ENCODE measurements at regions of chrX and their contacts with region 1.

Region 1: DNA sequence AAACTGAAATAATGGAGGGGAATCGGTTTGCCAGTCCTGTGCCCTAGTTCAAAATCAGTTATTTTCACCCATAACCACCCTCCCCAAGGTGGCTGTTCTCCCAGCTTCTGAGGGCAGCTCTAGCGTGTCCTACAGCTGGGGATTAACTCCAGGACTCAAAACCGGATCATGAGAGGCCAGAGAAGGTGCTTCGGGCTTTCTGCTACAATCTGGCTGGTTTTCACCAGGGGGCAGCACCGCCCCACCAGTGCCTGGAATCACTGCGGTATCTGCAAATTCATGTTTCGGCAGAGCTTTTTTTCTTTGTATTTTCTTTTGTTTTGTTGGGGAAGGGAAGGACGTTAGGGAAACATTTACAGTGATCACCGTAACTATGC is 28.4 kb downstream of the PDHA1 start:
- DNase-seq: peak; percentile 50 to 79 (median 68)
- H3K4me3 ChIP-seq: peak overlapping the region; percentile 9
- H3K27ac ChIP-seq: no peak overlapping the region
- H3K4me1 ChIP-seq: no peaks in the 10 kb centered on the region
- H3K27me3 ChIP-seq: no peaks in the 10 kb centered on the region
- CTCF ChIP-seq: peak; percentile 30 to 54 (median 42)
- EP300 ChIP-seq: no peak
- POLR2A ChIP-seq: no peak

Region 2: GRCh38 chrX:19535476-19535875 is 163.3 kb after region 1 on chrX:
- intact Hi-C with region 1: loop called in 3 of 4 experiments (anchors 10 kb)
- DNase-seq: no peak
- H3K4me3 ChIP-seq: no peak overlapping the region
- H3K27ac ChIP-seq: no peak overlapping the region
- H3K4me1 ChIP-seq: no peaks in the 10 kb centered on the region
- H3K27me3 ChIP-seq: no peaks in the 10 kb centered on the region
- CTCF ChIP-seq: no peak
- EP300 ChIP-seq: no peak
- POLR2A ChIP-seq: no peak

Region 3: DNA sequence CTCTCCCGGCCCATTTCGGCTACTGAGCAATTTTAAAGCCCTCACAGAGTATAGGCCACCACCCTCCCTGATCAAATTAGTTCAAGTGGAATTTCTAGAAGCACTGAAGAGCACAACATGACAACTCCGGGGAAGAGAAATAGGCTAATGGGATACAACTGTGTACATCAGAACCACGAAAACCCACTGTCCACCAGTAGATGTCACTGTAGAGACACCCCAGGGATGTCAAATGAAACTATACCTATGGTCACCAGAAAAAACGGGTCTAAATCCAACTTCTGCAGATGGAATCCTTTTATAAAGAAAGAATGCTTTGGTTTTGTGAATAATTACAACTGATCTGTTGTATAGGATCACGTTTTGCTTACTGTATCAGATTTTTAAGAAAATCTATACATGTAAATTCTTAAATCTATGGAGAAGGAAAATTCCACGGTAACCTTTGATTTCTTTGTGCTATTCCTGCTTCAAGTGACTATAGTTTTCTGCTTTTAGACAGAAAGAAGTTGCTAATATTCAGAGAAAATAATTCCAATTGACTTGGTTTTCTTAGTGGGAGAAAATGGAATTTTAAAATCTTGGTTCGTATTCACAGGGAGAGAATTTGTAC is 172.6 kb after region 1 on chrX:
- intact Hi-C with region 1: loop called in 3 of 4 experiments (anchors 10 kb)
- DNase-seq: peak in 2 of 5 donors; percentile 31 to 47
- H3K4me3 ChIP-seq: no peak overlapping the region
- H3K27ac ChIP-seq: no peak overlapping the region
- H3K4me1 ChIP-seq: no peaks in the 10 kb centered on the region
- H3K27me3 ChIP-seq: no peaks in the 10 kb centered on the region
- CTCF ChIP-seq: peak; percentile 29 to 40 (median 34)
- EP300 ChIP-seq: no peak
- POLR2A ChIP-seq: no peak

Region 4: DNA sequence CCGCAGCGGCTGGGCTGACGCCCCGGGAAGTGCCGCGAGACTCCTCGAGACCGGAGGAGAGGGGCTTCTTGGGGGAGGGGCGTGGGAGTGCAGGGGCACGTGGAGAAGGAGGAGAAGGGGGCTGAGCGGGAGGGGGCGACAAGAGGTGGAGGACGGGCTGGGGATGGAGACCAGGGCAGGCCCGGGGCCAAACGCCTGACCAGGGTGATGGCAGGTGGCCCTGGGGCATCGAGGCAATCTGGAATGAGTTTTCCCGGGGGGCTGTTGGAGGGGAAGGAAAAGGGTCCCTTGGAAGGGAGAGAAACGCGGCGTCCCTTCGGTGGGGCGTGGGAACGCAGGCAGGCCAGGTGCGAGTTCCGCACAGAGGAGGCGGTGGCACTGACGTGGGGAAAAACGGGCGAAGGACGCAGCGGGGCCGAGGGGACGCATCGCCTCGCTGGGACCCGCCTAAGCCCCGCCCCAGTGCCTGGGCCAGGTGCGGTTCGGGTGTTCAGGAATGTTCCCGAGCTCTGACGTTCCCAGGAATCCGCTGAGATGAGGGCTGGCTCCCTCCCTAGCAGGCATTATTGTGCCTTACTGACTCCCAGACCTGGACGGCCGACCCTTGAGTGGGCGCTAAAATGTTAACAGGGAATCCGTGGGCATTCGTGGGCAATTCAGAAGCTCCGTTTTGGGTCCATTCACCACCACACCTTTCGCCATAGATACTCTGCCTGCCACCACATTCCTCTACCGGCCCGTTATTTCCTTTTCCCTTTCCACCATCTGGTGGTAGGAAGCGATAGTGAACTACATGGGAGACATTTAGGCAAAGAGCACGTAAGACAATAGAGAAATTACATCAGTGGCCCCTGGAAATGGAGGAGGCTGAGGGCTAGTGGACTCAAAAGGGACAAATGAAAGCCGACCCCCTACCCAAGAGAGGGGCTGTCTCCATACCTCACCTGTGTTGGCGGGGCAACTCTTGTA is 516.0 kb after region 1 on chrX:
- intact Hi-C with region 1: no loop called
- DNase-seq: peak; percentile 37 to 72 (median 55)
- H3K4me3 ChIP-seq: peak overlapping the region; percentile 44
- H3K27ac ChIP-seq: peak overlapping the region; percentile 67 to 75
- H3K4me1 ChIP-seq: no peaks in the 10 kb centered on the region
- H3K27me3 ChIP-seq: no peaks in the 10 kb centered on the region
- CTCF ChIP-seq: peak in 2 of 3 donors; percentile 57 to 68
- EP300 ChIP-seq: no peak
- POLR2A ChIP-seq: no peak